Esophagus muscularis mucosa (tissue), 4 donors: ENCODE measurements at regions of chr5 and their contacts with region 1.

Region 1: DNA sequence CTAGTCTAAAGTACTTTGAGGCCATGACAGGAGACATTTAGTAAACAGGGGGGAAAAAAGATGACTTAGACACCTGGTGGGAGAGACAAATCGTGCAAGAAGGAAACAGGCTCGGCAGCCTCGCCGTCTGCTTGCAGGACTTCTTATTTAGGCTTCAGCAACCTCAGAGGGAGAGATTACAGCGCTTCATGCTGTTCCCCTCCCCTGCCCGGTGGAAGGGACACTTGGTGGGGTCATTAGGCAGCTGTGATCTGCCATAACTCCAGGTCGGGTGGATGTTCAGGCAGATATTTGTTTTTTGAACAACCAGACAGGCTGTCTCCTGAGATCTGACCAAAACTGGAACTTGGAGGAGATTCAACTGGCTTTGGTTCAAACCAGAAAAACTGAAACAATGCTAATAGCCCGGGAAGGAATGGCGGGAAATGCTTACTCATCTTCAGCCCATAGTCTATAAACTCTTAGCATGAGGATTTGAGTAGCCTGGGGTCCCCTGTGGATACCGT is 38.1 kb upstream of the CD180 start:
- DNase-seq: no peak
- H3K4me3 ChIP-seq: peak overlapping the region in 3 of 4 donors; percentile 28 to 39 (median 34)
- H3K27ac ChIP-seq: peak overlapping the region; percentile 67 to 85 (median 72)
- H3K4me1 ChIP-seq: peaks cover 11 to 62% (median 51%) of the 10 kb centered on the region in 4 donors
- H3K27me3 ChIP-seq: no peaks in the 10 kb centered on the region
- CTCF ChIP-seq: no peak
- EP300 ChIP-seq: no peak
- POLR2A ChIP-seq: no peak

Region 2: DNA sequence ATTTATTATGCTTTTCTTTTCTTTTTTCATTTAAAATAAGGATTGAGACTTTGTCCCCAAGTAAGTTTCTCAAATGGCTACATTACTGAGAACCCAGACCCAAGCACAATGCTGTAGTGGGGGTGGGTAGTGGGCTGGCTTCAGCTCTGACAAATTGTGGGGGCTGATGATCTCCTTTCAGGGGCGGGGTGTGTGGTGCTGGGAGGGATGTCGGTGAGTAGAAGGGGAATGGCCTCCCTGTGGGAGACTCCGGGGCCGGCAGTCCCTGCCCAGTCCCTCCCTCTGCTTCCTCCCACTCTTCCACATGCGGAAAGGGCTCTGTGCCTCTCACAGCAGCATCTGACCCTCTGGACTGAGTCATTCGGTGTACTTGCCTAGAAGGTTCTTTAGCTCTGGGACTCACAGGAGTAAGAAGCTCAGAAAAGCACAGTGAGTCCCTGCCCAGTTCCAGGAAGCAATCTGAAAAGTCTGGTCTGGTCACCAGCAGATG is 52.4 kb before region 1 on chr5:
- intact Hi-C with region 1: no loop called
- DNase-seq: no peak
- H3K4me3 ChIP-seq: no peak overlapping the region
- H3K27ac ChIP-seq: peak overlapping the region in 3 of 4 donors; percentile 16 to 40 (median 30)
- H3K4me1 ChIP-seq: peaks cover 8 to 16% (median 12%) of the 10 kb centered on the region in 4 donors
- H3K27me3 ChIP-seq: no peaks in the 10 kb centered on the region
- CTCF ChIP-seq: no peak
- EP300 ChIP-seq: no peak
- POLR2A ChIP-seq: no peak

Region 3: DNA sequence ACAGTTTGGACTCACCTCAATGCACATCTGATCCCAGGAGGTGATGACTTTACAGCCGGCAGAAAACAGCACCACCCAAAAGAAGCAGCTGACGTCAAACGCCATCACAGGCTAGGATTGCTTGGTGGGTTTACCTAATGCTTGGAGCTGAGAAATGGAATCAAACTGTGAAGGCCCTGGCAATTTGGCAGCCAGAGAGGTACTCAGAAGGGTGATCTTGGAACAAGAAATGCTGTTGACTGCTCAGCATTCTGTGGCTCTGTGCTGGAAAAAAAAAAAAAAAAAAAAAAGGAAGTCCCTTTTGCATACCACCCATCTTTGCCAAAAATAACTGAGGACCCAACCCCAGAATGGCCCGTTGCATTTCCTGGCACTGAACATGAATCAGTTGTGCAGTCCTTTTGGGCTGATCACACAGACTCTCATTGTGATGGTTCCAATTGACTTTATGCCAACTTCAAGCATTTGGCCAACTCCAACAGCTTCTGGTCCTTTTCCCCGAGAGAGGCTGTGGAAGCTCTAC is 38.1 kb before region 1 on chr5 and contains the start of gene CD180:
- intact Hi-C with region 1: no loop called
- DNase-seq: no peak
- H3K4me3 ChIP-seq: peak within 1 kb of the TSS in 1 of 4 donors; percentile 20
- H3K27ac ChIP-seq: no peak within 1 kb of the TSS
- H3K4me1 ChIP-seq: peaks cover 0 to 23% (median 18%) of the 10 kb centered on the region in 4 donors
- H3K27me3 ChIP-seq: no peaks in the 10 kb centered on the region
- CTCF ChIP-seq: no peak
- EP300 ChIP-seq: no peak
- POLR2A ChIP-seq: no peak
- total RNA-seq, gene CD180: 0.42 to 1.8 (median 0.67) TPM

Region 4: DNA sequence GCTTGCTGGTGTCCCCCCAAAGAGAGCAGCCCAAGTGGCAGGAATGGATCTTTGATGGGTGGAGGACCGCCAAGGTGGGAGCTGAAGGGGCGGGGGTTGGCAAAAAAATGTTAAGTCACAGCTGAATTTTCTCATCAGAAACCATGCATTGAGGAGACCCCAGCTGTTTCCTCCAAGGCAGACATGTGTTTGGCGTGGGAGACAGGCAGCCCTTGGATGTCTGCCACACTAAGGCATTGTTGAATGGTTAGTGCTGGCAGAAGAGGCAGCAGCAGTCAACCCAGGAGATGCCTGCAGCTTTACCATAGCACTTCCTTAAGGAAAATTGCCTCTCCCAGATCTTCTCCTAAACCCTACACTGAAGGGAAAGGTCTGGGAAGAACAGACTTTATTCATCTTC is 356.8 kb after region 1 on chr5:
- intact Hi-C with region 1: no loop called
- DNase-seq: no peak
- H3K4me3 ChIP-seq: no peak overlapping the region
- H3K27ac ChIP-seq: no peak overlapping the region
- H3K4me1 ChIP-seq: peaks cover 0 to 15% (median 12%) of the 10 kb centered on the region in 4 donors
- H3K27me3 ChIP-seq: no peaks in the 10 kb centered on the region
- CTCF ChIP-seq: no peak
- EP300 ChIP-seq: no peak
- POLR2A ChIP-seq: no peak

Region 5: DNA sequence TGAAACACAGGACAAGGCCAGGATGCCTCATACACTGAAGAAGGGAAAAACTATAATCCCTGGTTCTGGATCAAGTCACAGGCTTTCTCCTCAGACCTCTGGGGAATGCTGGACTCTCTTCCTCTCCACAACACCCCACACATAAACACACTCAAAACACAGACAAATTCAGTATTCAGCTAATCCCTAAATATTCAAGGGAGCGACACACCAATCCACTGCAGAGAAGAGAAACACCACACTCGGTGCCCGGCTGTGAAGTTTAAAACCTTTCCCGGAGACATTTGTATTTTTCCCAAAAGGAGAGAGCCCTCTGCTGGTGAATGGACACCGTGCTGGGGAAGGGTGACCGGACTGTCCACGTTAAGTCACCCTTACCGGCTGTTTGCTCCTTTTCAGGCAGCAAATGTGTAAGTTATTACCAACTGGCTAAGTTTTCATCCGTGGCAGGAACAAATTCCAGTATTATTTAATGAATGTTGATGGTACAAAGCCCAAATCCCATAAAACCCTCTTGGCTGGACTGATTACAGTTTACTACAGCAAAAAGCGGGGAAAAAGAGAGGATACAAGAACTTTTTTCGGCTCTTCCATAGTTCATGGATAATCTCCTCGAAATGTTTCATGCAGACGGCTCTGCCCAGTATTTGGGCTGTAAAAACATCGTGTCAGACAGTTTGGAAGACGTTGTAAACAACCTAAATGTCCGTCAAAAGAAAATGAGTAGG is 1728.2 kb after region 1 on chr5:
- intact Hi-C with region 1: loop called (anchors 10 kb)
- DNase-seq: no peak
- H3K4me3 ChIP-seq: no peak overlapping the region
- H3K27ac ChIP-seq: peak overlapping the region in 1 of 4 donors; percentile 21
- H3K4me1 ChIP-seq: peaks cover 0 to 11% (median 5%) of the 10 kb centered on the region in 4 donors
- H3K27me3 ChIP-seq: no peaks in the 10 kb centered on the region
- CTCF ChIP-seq: peak; percentile 80 to 91 (median 88)
- EP300 ChIP-seq: no peak
- POLR2A ChIP-seq: no peak